ENCODE measurements at regions of chr3 and their contacts with region 1.

Region 1: GRCh38 chr3:152298393-152299242 is 29.9 kb downstream of the MBNL1 start:
- DNase-seq: peak; percentile 29
- H3K4me3 Mint-ChIP-seq: peak overlapping the region; percentile 68
- H3K27ac Mint-ChIP-seq: peak overlapping the region; percentile 94
- H3K4me1 Mint-ChIP-seq: peaks cover 74% of the 10 kb centered on the region
- H3K27me3 Mint-ChIP-seq: no peaks in the 10 kb centered on the region

Region 2: GRCh38 chr3:152021916-152022461 is 276.6 kb before region 1 on chr3:
- intact Hi-C with region 1: no loop called
- DNase-seq: no peak
- H3K4me3 Mint-ChIP-seq: no peak overlapping the region
- H3K27ac Mint-ChIP-seq: no peak overlapping the region
- H3K4me1 Mint-ChIP-seq: no peaks in the 10 kb centered on the region
- H3K27me3 Mint-ChIP-seq: peaks cover 14% of the 10 kb centered on the region

Region 3: GRCh38 chr3:152071924-152072323 is 226.7 kb before region 1 on chr3:
- intact Hi-C with region 1: loop called (anchors 2 kb)
- DNase-seq: no peak
- H3K4me3 Mint-ChIP-seq: no peak overlapping the region
- H3K27ac Mint-ChIP-seq: no peak overlapping the region
- H3K4me1 Mint-ChIP-seq: no peaks in the 10 kb centered on the region
- H3K27me3 Mint-ChIP-seq: peaks cover 2% of the 10 kb centered on the region

Region 4: DNA sequence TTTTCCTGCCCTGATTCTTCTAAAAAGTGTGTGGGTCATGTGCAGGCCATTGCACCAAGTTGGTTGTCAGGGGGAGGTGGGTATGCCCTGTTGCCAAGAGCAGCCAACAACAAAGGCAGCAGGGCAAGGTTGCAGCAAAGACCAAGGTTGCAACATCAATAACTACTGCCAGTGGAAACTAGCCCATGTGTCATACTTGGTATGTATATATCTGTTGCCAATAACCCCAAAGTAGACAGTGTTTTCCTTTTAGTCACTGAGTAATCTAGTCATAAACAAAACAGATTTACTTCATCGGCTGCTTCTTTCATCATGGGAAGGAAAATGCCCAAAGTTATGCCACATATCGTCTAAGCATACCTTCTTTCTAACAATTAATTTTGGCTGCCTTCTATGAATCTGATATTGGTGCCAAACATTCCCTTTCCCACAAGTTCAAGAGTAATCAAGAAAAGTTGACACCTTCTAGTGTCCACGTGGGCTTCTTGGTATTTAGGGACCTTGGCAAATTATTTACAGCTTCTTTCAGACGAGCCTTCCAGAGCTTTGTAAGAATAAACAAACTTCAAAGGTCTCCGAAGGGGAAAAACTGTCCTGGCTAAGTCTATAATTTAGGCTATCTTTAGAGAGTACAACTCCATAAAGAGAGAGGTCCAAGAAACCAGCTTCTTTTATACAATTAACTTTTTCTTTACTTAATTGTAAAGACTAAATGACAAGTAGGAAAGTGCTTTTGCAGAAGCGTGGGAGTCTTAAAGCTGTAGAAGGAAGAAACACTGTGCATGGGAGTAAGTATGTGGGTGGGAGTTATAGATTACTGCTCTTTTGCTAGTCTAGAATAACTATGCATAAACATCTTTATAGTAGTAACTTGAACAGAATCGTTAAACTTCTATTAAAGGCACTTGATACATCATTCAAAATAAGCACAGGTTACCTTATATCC is 39.9 kb before region 1 on chr3:
- intact Hi-C with region 1: loop called (anchors 1 kb)
- DNase-seq: peak; percentile 62
- H3K4me3 Mint-ChIP-seq: peak overlapping the region; percentile 81
- H3K27ac Mint-ChIP-seq: peak overlapping the region; percentile 98
- H3K4me1 Mint-ChIP-seq: peaks cover 90% of the 10 kb centered on the region
- H3K27me3 Mint-ChIP-seq: no peaks in the 10 kb centered on the region

Region 5: DNA sequence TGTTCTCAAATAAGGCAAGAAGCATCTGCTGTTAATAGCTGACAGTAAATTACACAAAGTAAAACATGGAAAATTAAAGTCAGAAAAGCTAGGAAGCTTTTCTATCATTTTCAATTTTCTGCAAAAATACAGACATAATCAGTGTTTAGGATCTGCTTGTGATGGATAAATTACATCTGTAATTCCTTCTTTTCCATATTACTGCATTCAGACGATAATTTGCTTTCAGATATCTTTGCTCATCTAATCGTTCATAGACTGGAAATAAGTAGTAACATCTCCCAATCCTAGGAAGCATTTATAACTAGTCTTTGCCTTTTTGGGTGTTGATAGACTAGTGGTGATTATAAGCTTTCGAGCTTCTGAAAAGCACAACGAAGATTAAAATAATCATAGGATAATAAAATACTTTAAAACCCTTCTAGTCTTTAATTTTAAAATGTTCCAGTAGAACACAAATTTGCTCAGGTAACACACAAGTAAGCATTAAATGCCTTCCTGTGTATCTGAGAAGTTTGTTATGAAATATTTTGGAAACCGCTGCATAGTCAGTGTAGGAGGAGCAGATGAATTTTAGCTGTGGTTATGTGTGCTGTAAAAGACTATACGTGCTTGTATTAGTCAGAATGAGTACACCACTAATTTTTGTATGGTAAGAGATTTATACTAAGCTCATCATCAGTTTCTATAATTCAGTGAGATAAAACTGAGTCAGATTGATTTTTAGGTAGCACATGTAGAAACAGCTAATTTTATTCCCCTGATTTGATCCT is 11.1 kb after region 1 on chr3:
- intact Hi-C with region 1: loop called (anchors 1 kb)
- DNase-seq: no peak
- H3K4me3 Mint-ChIP-seq: no peak overlapping the region
- H3K27ac Mint-ChIP-seq: peak overlapping the region; percentile 78
- H3K4me1 Mint-ChIP-seq: peaks cover 74% of the 10 kb centered on the region
- H3K27me3 Mint-ChIP-seq: no peaks in the 10 kb centered on the region

Region 6: GRCh38 chr3:152331018-152331541 is 32.5 kb after region 1 on chr3:
- intact Hi-C with region 1: loop called (anchors 1 kb)
- DNase-seq: no peak
- H3K4me3 Mint-ChIP-seq: peak overlapping the region; percentile 12
- H3K27ac Mint-ChIP-seq: peak overlapping the region; percentile 86
- H3K4me1 Mint-ChIP-seq: peaks cover 83% of the 10 kb centered on the region
- H3K27me3 Mint-ChIP-seq: no peaks in the 10 kb centered on the region

Measured in activated T-helper 1 cell treated with anti-CD3 and anti-CD28 coated beads, Interleukin-12 subunit alpha, Interleukin-12 subunit beta, Interleukin-2, Interleukin-4 antibody, amounts not matched to agents 30 ng/mL and 10 ng/mL and 1 ng/mL, durations not matched to agents 14 hours and 24 hours and 36 hours (primary cell).